BJ (cell line): ENCODE measurements at regions of chr12 and their contacts with region 1.

Region 1: DNA sequence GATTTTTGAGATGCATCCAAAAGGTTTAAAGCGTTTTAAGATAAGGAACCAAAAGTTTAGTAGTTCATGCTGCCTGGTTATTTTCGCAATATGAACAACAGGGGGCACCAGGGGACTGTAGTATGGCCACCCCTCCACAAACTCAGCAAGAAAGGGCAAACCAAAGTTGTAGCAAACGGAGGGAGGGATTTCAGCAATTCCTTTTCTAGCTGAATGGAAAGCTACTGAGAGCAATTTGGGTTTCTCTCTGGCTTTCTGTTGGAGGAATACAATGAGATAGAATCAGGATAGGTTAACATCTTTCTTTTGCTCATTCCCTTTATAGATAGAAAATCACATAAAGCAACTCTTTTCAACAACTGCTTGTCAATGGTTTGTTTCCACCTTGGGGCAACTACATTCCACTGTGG is 62.5 kb downstream of the DRAM1 start:
- DNase-seq: peak; percentile 37
- H3K4me3 ChIP-seq: no peak overlapping the region
- H3K27me3 ChIP-seq: no peaks in the 10 kb centered on the region
- CTCF ChIP-seq: peak; percentile 80

Region 2: GRCh38 chr12:101925935-101926334 is 13.9 kb before region 1 on chr12:
- CTCF ChIA-PET with region 1: no interaction called
- POLR2A ChIA-PET with region 1: no interaction called
- DNase-seq: no peak
- H3K4me3 ChIP-seq: no peak overlapping the region
- H3K27me3 ChIP-seq: no peaks in the 10 kb centered on the region
- CTCF ChIP-seq: no peak

Region 3: DNA sequence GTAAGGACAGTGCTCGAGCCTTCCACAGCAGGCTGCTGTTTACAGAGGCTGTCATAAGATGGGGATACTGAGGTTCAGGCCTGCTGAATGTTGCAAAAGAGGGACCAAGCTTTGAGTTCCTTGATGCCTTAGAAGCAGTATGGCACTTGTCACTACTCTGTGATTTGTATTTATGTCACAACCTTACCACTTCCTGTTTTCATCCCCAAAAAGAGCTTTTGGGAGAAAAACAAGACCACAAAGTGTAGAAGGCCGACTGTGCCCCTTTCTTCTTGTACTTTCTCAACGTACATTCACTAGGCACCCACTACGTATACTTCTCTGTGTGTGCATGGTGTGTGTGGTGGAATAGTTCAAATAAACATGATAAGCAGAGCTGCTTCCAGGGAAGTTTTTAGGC is 27.6 kb after region 1 on chr12:
- CTCF ChIA-PET with region 1: no interaction called
- POLR2A ChIA-PET with region 1: no interaction called
- DNase-seq: no peak
- H3K4me3 ChIP-seq: no peak overlapping the region
- H3K27me3 ChIP-seq: no peaks in the 10 kb centered on the region
- CTCF ChIP-seq: no peak

Region 4: DNA sequence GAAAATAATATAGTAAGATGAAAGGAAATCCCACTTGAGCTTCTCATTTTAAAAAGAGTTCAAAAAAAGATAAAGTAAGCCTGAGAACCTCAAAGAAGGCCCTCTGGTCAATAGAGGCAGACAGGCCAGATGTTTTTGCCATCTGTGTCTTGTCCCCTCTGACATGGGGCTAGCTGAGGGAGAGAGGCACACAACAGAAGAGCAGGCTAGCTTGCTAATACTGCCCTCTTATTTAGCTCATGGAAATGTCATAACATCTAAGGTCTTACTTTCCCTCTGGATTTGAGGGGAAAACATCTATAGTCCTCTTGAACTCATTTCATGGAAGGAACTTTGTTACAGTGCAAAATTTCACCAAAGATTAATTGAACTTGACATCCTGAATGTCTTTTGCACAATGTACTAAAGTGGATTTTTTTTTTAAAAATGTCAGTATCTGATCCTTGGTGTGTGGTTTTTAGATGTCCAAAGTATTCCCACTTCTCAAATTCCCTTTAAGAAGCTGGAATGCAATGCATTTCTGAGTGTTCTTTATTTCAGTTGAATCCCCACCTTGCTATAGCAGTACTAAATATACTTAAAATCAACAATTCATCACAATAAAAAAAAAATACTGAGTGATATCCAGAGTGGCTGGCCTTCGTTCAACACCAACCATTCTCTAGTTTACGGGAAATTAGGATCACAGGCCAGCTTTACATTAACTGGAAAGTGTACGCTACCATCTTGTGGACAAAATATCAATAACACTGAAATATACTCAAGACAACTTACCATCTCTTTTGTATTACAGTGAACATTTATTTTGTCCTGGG is 800.5 kb after region 1 on chr12:
- CTCF ChIA-PET with region 1: interaction called, 10 read pairs
- POLR2A ChIA-PET with region 1: no interaction called
- DNase-seq: peak; percentile 31
- H3K4me3 ChIP-seq: no peak overlapping the region
- H3K27me3 ChIP-seq: no peaks in the 10 kb centered on the region
- CTCF ChIP-seq: peak; percentile 44

Region 5: DNA sequence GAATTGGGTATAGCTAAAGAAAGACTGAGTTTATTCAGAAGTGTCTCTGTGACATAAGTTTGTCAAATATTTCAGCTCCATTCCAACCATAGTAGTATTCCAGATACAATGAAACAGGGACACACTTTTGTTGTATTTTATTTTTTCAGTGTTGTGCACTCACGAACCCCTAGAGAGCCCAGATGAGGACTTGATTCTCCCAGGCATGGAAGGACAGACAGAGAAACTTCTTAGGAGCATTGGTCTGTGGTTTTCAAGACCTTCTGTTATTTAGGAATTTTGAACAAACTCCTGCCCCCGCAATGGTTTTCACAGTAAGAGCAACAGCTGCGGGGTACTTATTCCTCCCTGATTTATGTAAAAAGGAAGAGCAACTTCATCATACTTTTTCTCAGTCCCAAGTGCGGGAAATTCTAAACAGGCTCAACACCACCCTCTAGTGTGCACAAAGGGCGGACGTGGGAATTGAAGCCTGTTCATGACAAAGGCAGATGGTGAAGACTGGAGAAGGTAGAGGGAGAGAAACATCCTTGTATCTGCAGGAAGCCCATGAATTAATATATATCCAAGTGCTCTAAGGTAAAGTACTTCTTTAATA is 829.6 kb after region 1 on chr12:
- CTCF ChIA-PET with region 1: interaction called, 17 read pairs
- POLR2A ChIA-PET with region 1: no interaction called
- DNase-seq: peak; percentile 49
- H3K4me3 ChIP-seq: no peak overlapping the region
- H3K27me3 ChIP-seq: no peaks in the 10 kb centered on the region
- CTCF ChIP-seq: peak; percentile 84

Region 6: GRCh38 chr12:102811110-102811737 is 871.4 kb after region 1 on chr12:
- CTCF ChIA-PET with region 1: interaction called, 22 read pairs
- POLR2A ChIA-PET with region 1: no interaction called
- DNase-seq: no peak
- H3K4me3 ChIP-seq: no peak overlapping the region
- H3K27me3 ChIP-seq: 0 out of 2 replicates have a peak, but pooled peaks cover 2% of the 10 kb centered on the region
- CTCF ChIP-seq: peak; percentile 53

Region 7: DNA sequence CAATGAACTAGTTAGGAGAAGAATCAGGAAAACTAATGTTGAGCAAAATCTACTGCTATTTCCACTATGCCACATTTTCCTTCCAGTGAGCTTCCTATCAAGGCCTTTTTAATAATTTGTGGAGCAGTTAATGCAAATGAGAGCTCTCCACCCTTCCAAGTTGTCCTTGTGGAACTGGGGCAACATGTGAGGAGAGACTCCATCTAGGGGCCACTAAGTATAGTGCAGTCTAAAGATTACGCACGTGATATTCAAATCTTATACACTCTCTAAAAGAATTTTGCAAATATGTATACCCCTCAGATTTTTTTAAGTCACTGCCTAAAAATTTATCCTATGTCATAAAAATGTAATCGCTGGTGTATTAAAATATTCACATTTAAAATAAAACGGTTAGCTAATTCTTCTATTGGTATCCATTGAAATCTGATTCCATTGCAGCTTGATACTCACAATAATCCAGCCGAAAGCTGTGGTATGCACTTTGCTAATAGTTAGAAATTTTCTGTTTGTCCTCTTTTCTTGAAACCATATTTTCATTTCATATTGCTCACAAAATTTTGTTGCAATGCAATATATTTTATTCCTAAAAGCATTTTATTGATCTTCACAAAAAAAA is 877.1 kb after region 1 on chr12:
- CTCF ChIA-PET with region 1: interaction called, 22 read pairs
- POLR2A ChIA-PET with region 1: no interaction called
- DNase-seq: no peak
- H3K4me3 ChIP-seq: no peak overlapping the region
- H3K27me3 ChIP-seq: 0 out of 2 replicates have a peak, but pooled peaks cover 2% of the 10 kb centered on the region
- CTCF ChIP-seq: peak; percentile 86